WTC11 (cell line): ENCODE measurements at regions of chr16 and their contacts with region 1.

Region 1: GRCh38 chr16:117379-118365 is 20.8 kb downstream of the NPRL3 start:
- DNase-seq: peak; percentile 84
- ATAC-seq: peak; percentile 97
- H3K4me3 Mint-ChIP-seq: no peak overlapping the region
- H3K27ac Mint-ChIP-seq: no peak overlapping the region
- H3K4me1 Mint-ChIP-seq: peaks cover 5% of the 10 kb centered on the region
- H3K27me3 Mint-ChIP-seq: no peaks in the 10 kb centered on the region
- CTCF ChIP-seq: peak; percentile 92

Region 2: DNA sequence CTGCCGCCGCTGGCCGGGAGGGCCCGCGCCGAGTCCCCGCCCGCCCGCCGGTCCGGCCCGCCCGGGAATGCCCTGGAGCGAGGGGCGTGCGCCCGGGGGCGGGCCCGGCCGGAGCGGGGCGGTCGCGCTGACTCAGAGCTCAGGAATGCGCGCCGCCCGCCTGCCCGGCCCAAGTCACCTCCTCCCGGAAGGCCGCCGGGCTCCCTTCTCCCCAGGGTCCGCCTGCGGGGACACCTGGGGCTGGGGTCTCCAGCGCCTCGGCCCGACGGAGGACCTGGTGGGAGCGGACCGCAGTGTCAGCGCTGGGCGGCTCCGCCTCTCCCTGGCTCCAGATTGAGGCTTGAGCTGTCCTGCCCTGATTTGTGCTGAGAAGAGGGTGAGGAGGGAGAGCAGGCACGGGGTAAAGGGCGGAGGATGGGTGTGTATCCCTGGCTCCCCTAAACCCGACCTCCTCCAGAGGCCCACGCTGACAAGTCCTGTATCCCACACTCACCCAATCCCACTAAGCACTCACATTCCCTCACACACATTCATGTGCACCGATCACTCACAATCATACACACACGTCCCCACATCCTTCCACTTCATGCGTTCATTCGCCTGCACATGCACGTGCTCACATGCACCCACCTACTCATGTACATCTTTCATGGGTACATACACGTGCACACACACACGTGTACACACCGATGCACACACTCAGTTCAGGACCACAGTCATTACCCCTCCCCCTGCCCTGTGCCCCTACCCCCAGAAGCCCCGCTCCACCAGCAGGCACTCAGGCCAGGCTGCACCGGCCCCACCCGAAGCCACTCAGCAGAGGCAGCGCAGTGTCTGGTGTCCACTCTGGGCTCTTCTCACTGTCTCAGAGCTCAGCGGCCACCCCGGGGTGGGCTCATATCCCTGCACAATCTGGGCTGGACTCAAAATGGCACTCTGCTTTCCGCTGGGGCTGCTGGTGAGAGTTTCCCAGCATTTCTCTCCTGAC is 44.8 kb before region 1 on chr16 and contains the start of gene RHBDF1:
- CTCF ChIA-PET with region 1: interaction called, 18 read pairs
- POLR2A ChIA-PET with region 1: no interaction called
- DNase-seq: peak; percentile 74
- ATAC-seq: peak; percentile 43
- H3K4me3 Mint-ChIP-seq: peak within 1 kb of the TSS; percentile 81
- H3K27ac Mint-ChIP-seq: peak within 1 kb of the TSS; percentile 96
- H3K4me1 Mint-ChIP-seq: peaks cover 61% of the 10 kb centered on the region
- H3K27me3 Mint-ChIP-seq: no peaks in the 10 kb centered on the region; the same call in 1 of the 2 replicates
- CTCF ChIP-seq: no peak
- total RNA-seq, gene RHBDF1: 40.9 to 60.8 TPM (median 44.2 TPM) in 3 replicates

Region 3: DNA sequence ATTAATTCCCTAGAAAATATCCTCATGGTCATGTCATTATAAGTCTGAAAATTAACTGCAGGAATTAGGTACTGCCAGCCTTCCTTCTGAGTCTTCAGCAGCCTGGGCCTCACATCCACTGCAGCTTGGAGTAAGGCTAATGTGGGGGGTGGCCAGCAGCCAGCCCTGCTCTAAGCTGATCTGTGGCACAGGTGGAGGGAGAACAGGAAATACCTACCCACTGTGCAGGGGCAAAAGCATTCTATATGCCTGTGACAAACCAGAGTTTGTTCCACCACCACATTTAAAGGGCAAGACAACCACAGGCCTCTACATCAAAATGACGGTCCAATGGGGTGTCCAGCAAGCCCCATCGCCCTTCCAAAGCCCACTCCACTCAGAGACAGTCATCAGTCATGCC is 11.4 kb after region 1 on chr16:
- CTCF ChIA-PET with region 1: interaction called, 27 read pairs
- POLR2A ChIA-PET with region 1: no interaction called
- DNase-seq: no peak
- ATAC-seq: no peak
- H3K4me3 Mint-ChIP-seq: no peak overlapping the region
- H3K27ac Mint-ChIP-seq: peak overlapping the region; percentile 15; the same call in 1 of the 2 replicates
- H3K4me1 Mint-ChIP-seq: no peaks in the 10 kb centered on the region
- H3K27me3 Mint-ChIP-seq: no peaks in the 10 kb centered on the region
- CTCF ChIP-seq: no peak

Region 4: GRCh38 chr16:138049-138417 is 20.4 kb after region 1 on chr16:
- CTCF ChIA-PET with region 1: interaction called, 11 read pairs
- POLR2A ChIA-PET with region 1: no interaction called
- DNase-seq: peak; percentile 57
- ATAC-seq: peak; percentile 27
- H3K4me3 Mint-ChIP-seq: peak overlapping the region; percentile 80
- H3K27ac Mint-ChIP-seq: no peak overlapping the region
- H3K4me1 Mint-ChIP-seq: no peaks in the 10 kb centered on the region
- H3K27me3 Mint-ChIP-seq: peaks cover 12% of the 10 kb centered on the region
- CTCF ChIP-seq: no peak

Region 5: DNA sequence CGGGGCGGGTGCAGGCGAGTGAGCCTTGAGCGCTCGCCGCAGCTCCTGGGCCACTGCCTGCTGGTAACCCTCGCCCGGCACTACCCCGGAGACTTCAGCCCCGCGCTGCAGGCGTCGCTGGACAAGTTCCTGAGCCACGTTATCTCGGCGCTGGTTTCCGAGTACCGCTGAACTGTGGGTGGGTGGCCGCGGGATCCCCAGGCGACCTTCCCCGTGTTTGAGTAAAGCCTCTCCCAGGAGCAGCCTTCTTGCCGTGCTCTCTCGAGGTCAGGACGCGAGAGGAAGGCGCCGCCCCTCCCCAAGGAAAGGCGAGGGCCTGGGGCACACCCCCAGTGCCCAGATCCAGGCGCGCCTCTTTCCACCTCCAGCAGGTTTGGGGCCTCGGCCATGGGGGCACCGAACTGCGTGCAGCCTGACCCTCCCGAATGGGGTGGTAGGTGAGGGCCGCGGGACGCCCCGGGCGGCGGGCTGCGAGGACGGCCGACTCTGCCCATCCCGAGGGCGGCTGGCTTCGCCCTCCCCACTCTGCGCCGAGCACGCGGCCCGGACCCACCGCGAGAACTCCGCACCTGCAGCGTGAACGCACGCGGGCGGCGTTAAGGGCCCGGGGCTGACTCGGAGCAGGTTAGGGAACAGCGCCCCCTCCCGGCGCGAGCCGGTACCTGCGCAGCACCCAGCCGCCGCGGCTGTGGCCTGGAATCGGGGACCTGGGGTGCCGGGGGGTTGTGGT is 63.4 kb after region 1 on chr16:
- CTCF ChIA-PET with region 1: interaction called, 37 read pairs
- POLR2A ChIA-PET with region 1: no interaction called
- DNase-seq: peak; percentile 93
- ATAC-seq: peak; percentile 65
- H3K4me3 Mint-ChIP-seq: peak overlapping the region; percentile 56
- H3K27ac Mint-ChIP-seq: no peak overlapping the region
- H3K4me1 Mint-ChIP-seq: no peaks in the 10 kb centered on the region
- H3K27me3 Mint-ChIP-seq: peaks cover 41% of the 10 kb centered on the region
- CTCF ChIP-seq: peak; percentile 99

Region 6: GRCh38 chr16:361872-362701 is 244.4 kb after region 1 on chr16:
- CTCF ChIA-PET with region 1: interaction called, 20 read pairs
- POLR2A ChIA-PET with region 1: no interaction called
- DNase-seq: peak; percentile 83
- ATAC-seq: peak; percentile 79
- H3K4me3 Mint-ChIP-seq: no peak overlapping the region
- H3K27ac Mint-ChIP-seq: no peak overlapping the region
- H3K4me1 Mint-ChIP-seq: no peaks in the 10 kb centered on the region
- H3K27me3 Mint-ChIP-seq: no peaks in the 10 kb centered on the region
- CTCF ChIP-seq: 0 out of 2 replicates have a peak, but pooled peaks have one; percentile 30